ENCODE measurements at regions of chr12 and their contacts with region 1.

Region 1: DNA sequence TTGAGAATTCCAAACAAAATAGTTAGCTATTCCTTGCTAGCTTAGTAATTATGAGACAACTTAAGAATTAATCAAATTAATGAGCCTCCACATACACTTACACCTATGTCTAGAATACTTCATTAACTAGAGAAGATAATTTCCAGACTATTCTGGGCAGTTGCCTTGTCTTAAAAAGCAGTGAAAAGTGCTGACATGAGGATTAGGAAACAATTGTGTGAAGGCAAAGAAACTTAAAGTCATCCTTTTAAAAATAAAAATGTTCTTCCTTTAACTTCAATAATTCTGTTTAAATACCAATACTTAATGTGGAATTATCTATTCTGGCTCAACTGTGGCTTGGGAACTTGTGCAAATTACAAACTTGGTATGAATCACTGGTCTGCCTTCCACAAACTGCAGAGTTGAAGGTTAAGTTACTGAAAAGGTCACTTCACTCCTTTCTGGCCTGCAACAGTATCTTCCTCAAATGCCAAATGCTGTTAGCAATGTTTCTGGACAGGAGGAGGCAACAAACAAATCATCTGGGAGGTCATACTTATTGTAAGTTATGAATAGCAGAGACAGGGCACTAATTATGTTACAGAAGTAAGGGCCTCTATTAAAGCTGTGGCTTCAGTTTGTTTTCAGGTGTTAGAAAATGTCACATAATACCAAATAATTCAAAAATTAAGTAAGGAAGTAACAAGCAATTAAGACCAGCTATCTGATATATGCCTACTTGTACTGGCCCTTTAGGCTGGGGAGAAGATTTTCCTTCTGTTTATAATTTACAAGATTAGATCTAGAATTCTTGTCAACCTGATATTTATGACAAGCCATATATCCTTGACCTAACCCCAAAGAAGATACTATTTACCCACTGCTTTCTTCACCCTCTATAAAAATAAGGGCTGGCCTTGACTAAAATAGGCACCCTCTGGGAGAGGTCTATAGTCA is 19.1 kb downstream of the PPTC7 start:
- DNase-seq: no peak
- ATAC-seq: no peak
- H3K4me3 ChIP-seq: no peak overlapping the region
- H3K4me3 Mint-ChIP-seq: peak overlapping the region; percentile 55
- H3K27ac ChIP-seq: peak overlapping the region; percentile 44
- H3K27ac Mint-ChIP-seq: peak overlapping the region; percentile 90
- H3K4me1 ChIP-seq: peaks cover 33% of the 10 kb centered on the region
- H3K4me1 Mint-ChIP-seq: peaks cover 71% of the 10 kb centered on the region in 2 donors
- H3K27me3 ChIP-seq: no peaks in the 10 kb centered on the region
- H3K27me3 Mint-ChIP-seq: no peaks in the 10 kb centered on the region
- CTCF ChIP-seq: no peak

Region 2: GRCh38 chr12:110575326-110575725 is 11.4 kb after region 1 on chr12:
- intact Hi-C with region 1: loop called (anchors 1 kb)
- DNase-seq: no peak
- ATAC-seq: no peak
- H3K4me3 ChIP-seq: no peak overlapping the region
- H3K4me3 Mint-ChIP-seq: no peak overlapping the region
- H3K27ac ChIP-seq: peak overlapping the region; percentile 38
- H3K27ac Mint-ChIP-seq: peak overlapping the region; percentile 88 to 99
- H3K4me1 ChIP-seq: peaks cover 29% of the 10 kb centered on the region
- H3K4me1 Mint-ChIP-seq: peaks cover 53% of the 10 kb centered on the region in 2 donors
- H3K27me3 ChIP-seq: no peaks in the 10 kb centered on the region
- H3K27me3 Mint-ChIP-seq: no peaks in the 10 kb centered on the region
- CTCF ChIP-seq: no peak